Panc1 (cell line): ENCODE measurements at regions of chrX and their contacts with region 1.

Region 1: GRCh38 chrX:118823263-118824172 is at the start of gene ZCCHC12:
- DNase-seq: no peak
- ATAC-seq: peak; percentile 78
- H3K4me3 ChIP-seq: peak within 1 kb of the TSS; percentile 30 to 52
- H3K27ac ChIP-seq: no peak within 1 kb of the TSS
- H3K4me1 ChIP-seq: peaks cover 10% of the 10 kb centered on the region; the same call in 1 of the 2 replicates
- H3K27me3 ChIP-seq: peaks cover 20% of the 10 kb centered on the region
- CTCF ChIP-seq: no peak
- total RNA-seq, gene ZCCHC12: 0.10 TPM

Region 2: GRCh38 chrX:119194621-119195020 is 371.1 kb after region 1 on chrX:
- CTCF ChIA-PET with region 1: no interaction called
- POLR2A ChIA-PET with region 1: interaction called, 17 read pairs
- in situ Hi-C with region 1: no loop called
- intact Hi-C with region 1: no loop called
- DNase-seq: no peak
- ATAC-seq: no peak
- H3K4me3 ChIP-seq: no peak overlapping the region
- H3K27ac ChIP-seq: no peak overlapping the region
- H3K4me1 ChIP-seq: no peaks in the 10 kb centered on the region
- H3K27me3 ChIP-seq: no peaks in the 10 kb centered on the region; the same call in 1 of the 2 replicates
- CTCF ChIP-seq: peak; percentile 24